ENCODE measurements at regions of chr3 and their contacts with region 1.

Region 1: GRCh38 chr3:59575113-59576001 is 525.5 kb upstream of the CFAP20DC start:
- DNase-seq: peak; percentile 41
- H3K4me3 ChIP-seq: no peak overlapping the region
- H3K27ac ChIP-seq: no peak overlapping the region
- H3K4me1 ChIP-seq: no peaks in the 10 kb centered on the region
- H3K27me3 ChIP-seq: no peaks in the 10 kb centered on the region
- CTCF ChIP-seq: peak; percentile 84
- POLR2A ChIP-seq: no peak

Region 2: GRCh38 chr3:59212128-59212779 is 363.1 kb before region 1 on chr3:
- CTCF ChIA-PET with region 1: interaction called, 3 read pairs
- POLR2A ChIA-PET with region 1: no interaction called
- dilution Hi-C with region 1: no loop called
- intact Hi-C with region 1: loop called (anchors 2 kb)
- DNase-seq: peak; percentile 44
- H3K4me3 ChIP-seq: no peak overlapping the region
- H3K27ac ChIP-seq: no peak overlapping the region
- H3K4me1 ChIP-seq: peaks cover 9% of the 10 kb centered on the region
- H3K27me3 ChIP-seq: peaks cover 3 to 8% of the 10 kb centered on the region in 2 experiments
- CTCF ChIP-seq: peak; percentile 36 to 41
- POLR2A ChIP-seq: no peak

Region 3: GRCh38 chr3:59857589-59858346 is 282.4 kb after region 1 on chr3:
- CTCF ChIA-PET with region 1: interaction called, 5 read pairs
- POLR2A ChIA-PET with region 1: no interaction called
- dilution Hi-C with region 1: no loop called
- intact Hi-C with region 1: loop called (anchors 1 kb)
- DNase-seq: peak; percentile 58
- H3K4me3 ChIP-seq: no peak overlapping the region
- H3K27ac ChIP-seq: no peak overlapping the region
- H3K4me1 ChIP-seq: no peaks in the 10 kb centered on the region
- H3K27me3 ChIP-seq: no peaks in the 10 kb centered on the region
- CTCF ChIP-seq: peak; percentile 79 to 89
- POLR2A ChIP-seq: no peak

Region 4: DNA sequence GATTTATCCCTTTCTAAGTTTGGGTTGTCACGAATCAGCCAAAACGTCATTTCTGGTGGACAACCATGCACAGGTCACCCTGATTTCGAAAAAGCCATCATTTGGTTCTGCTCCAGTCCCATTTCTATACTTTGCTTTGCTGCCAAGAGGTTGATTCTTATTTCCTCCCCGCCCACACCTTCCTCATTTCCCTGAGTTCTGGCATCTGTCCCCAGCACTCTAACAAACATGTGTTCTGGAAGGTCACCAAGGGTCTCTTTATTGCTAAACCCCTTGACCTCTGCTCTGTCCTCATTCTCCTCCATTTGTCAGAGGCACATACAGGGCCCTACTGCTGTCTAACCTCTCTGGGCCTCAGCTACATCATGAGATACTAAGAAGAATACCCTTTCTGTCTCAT is 1949.6 kb after region 1 on chr3:
- CTCF ChIA-PET with region 1: interaction called, 11 read pairs
- POLR2A ChIA-PET with region 1: no interaction called
- dilution Hi-C with region 1: no loop called
- intact Hi-C with region 1: loop called (anchors 5 kb)
- DNase-seq: peak; percentile 49
- H3K4me3 ChIP-seq: no peak overlapping the region
- H3K27ac ChIP-seq: no peak overlapping the region
- H3K4me1 ChIP-seq: no peaks in the 10 kb centered on the region
- H3K27me3 ChIP-seq: peaks cover 0 to 6% of the 10 kb centered on the region in 2 experiments
- CTCF ChIP-seq: no peak
- POLR2A ChIP-seq: no peak

Measured in endothelial cell of umbilical vein (primary cell).